Lower leg skin (tissue), 4 donors: ENCODE measurements at regions of chr9 and their contacts with region 1.

Region 1: DNA sequence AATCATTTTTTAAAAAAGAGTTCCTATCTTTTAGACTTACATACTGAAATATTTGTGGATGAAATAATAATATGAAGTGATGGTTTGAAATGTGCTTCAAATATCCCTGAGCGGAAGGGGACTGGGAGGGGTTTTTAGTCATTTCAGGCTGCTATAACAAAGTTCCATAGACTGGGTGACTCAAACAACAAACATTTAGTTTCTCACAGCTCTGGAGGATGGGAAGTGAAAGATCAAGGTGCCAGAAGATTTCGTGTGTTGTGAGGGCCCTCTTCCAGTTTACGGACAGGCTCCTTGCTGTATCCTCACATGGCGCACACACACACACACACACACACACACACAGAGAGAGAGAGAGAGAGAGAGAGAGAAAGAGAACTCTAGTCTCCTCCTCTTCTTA is 27.1 kb upstream of the TEX10 start:
- DNase-seq: no peak
- H3K4me3 ChIP-seq: no peak overlapping the region
- CTCF ChIP-seq: no peak
- POLR2A ChIP-seq: no peak

Region 2: DNA sequence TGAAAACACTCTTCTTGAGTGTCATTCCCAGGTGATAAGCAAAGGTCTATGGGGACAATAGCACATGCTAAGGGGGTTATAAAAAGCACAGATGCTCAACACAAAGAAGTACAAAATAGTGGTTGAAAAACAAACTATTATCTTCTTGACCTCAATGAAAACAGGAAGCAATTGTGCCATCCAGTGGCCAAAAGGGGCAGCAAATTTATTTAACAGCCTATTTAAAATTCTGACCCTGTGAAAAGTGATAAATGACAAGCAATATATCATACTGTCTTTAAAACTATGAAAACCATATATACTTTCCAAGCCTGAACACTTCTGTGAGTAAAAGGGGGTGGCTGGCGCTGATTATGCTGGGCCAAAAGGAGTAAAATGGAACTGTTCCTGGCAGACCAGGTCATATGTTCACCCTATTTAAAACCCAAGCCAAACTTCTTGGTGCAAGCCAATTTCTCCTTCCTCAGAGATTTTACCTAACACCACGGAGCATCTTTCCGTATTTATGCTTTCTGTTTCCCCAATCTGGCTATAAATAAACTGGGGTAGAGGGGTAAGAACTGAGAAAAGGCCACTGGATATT is 56.8 kb before region 1 on chr9:
- intact Hi-C with region 1: loop called (anchors 10 kb)
- DNase-seq: no peak
- H3K4me3 ChIP-seq: no peak overlapping the region
- CTCF ChIP-seq: no peak
- POLR2A ChIP-seq: no peak